ENCODE measurements at regions of chrX and their contacts with region 1.

Region 1: DNA sequence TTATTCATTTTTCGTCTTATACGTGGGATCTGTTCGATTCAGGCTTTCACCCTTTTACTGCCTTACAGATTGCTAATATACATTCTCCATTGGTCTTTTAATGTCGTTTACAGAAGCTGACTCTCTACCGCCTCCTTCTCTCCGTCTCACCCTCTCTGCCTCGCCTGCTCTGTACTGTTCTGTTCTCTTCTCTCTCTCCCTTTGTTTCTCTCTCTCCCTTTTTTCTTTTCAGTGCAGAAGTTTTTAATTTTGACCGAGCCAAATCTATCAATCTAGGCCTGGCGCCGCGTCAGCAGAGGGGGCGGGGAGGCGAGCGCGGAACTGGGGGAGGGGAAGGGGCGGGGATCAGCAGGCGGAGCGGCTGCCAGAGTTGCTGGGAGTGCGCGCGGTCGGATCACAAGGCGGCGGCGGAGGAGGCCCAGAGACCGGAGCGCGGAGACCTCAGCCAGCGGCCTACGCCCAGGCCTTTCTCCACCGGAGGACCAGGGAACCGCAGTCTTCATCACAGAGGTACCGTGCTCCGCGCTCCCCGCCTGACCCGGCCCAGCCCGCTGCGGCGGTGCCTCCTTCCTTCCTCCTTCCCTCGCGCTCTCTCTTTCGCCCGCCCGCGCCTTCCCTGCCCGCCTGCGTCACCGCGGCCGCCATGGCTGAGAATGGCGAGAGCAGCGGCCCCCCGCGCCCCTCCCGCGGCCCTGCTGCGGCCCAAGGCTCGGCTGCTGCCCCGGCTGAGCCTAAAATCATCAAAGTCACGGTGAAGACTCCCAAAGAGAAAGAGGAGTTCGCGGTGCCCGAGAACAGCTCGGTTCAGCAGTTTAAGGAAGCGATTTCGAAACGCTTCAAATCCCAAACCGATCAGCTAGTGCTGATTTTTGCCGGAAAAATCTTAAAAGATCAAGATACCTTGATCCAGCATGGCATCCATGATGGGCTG is at the start of gene UBQLN2:
- DNase-seq: peak; percentile 74
- H3K4me3 Mint-ChIP-seq: peak within 1 kb of the TSS; percentile 93
- H3K27ac Mint-ChIP-seq: peak within 1 kb of the TSS; percentile 98
- H3K4me1 Mint-ChIP-seq: peaks cover 11% of the 10 kb centered on the region
- H3K27me3 Mint-ChIP-seq: no peaks in the 10 kb centered on the region
- total RNA-seq, gene UBQLN2: 37.6 and 40.5 TPM in 2 replicates

Region 2: GRCh38 chrX:55717521-55718497 is 845.7 kb before region 1 on chrX and contains the start of gene RRAGB:
- intact Hi-C with region 1: loop called (anchors 5 kb)
- DNase-seq: peak; percentile 88
- H3K4me3 Mint-ChIP-seq: peak within 1 kb of the TSS; percentile 87
- H3K27ac Mint-ChIP-seq: peak within 1 kb of the TSS; percentile 83
- H3K4me1 Mint-ChIP-seq: peaks cover 17% of the 10 kb centered on the region
- H3K27me3 Mint-ChIP-seq: no peaks in the 10 kb centered on the region
- total RNA-seq, gene RRAGB: 5.2 and 6.4 TPM in 2 replicates

Region 3: GRCh38 chrX:56368962-56369361 is 194.5 kb before region 1 on chrX:
- intact Hi-C with region 1: loop called (anchors 1 kb)
- DNase-seq: no peak
- H3K4me3 Mint-ChIP-seq: peak overlapping the region; percentile 8
- H3K27ac Mint-ChIP-seq: peak overlapping the region; percentile 9
- H3K4me1 Mint-ChIP-seq: peaks cover 39% of the 10 kb centered on the region
- H3K27me3 Mint-ChIP-seq: no peaks in the 10 kb centered on the region

Region 4: GRCh38 chrX:56588397-56589188 is 25.1 kb after region 1 on chrX:
- intact Hi-C with region 1: no loop called
- DNase-seq: no peak
- H3K4me3 Mint-ChIP-seq: no peak overlapping the region
- H3K27ac Mint-ChIP-seq: no peak overlapping the region
- H3K4me1 Mint-ChIP-seq: no peaks in the 10 kb centered on the region
- H3K27me3 Mint-ChIP-seq: no peaks in the 10 kb centered on the region

Region 5: DNA sequence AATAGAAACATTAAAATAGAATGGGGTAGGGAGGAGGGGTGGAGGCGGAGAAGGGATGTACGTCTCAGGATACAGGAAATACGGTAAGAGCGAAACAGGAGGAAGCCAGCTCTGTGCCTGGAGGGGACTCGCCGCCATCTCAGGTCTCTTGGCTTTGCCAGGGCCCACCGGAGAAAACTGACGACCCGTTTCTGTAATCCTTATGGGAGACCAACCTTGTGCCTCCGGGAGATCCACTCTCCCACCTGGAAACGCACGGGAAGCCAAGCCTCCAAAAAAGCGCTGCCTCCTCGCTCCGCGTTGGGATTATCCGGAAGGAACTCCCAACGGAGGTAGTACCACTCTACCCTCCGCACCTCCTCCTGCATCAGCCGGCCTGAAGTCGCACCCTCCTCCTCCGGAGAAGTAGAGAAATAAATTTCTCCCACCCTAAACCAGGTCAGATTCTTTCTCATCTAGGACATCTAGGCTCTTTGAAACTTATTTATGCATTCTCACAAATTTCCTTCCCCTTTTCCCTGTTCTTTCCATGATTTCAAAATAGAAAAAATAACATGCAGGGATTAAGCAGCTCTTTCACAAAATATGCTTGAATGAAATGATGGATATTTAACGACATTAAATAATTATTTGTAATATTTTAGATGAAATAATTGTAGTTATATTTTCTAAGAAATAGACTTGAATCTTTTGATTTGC is 165.8 kb after region 1 on chrX and contains the start of gene NBDY:
- intact Hi-C with region 1: loop called (anchors 2 kb)
- DNase-seq: peak; percentile 11
- H3K4me3 Mint-ChIP-seq: peak within 1 kb of the TSS; percentile 91
- H3K27ac Mint-ChIP-seq: peak within 1 kb of the TSS; percentile 83
- H3K4me1 Mint-ChIP-seq: peaks cover 19% of the 10 kb centered on the region
- H3K27me3 Mint-ChIP-seq: no peaks in the 10 kb centered on the region
- total RNA-seq, gene NBDY: 33.9 and 36.5 TPM in 2 replicates

Region 6: DNA sequence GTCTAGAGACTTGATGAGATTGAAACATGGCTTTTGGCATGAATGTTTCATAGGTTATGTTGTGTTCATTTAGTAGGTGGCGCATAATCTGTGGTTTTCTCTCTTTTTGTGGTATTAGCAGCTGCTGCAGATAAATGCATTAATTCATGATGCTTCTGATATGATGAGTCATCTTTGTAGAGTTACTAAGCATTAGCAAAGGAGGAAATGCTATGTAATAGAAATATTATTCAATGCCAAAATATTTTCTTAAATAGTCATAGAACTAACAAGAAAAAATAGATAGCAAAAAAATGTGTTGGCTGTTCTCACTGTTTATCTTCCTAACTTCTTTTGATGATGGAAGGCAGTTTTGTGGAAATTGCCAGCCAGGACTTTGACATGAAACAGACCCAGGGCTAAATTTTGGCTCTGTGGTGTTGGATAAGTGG is 1031.9 kb after region 1 on chrX:
- intact Hi-C with region 1: loop called (anchors 5 kb)
- DNase-seq: no peak
- H3K4me3 Mint-ChIP-seq: peak overlapping the region; percentile 74
- H3K27ac Mint-ChIP-seq: peak overlapping the region; percentile 63
- H3K4me1 Mint-ChIP-seq: peaks cover 24% of the 10 kb centered on the region
- H3K27me3 Mint-ChIP-seq: no peaks in the 10 kb centered on the region

Measured in activated T-helper 2 cell treated with anti-CD3 and anti-CD28 coated beads, Interferon-gamma antibody, Interleukin-2, Interleukin-4, amounts not matched to agents 10 μg/mL and 5 μg/mL and 100 μg/mL, durations not matched to agents 14 hours and 24 hours and 36 hours (primary cell).